Spleen (tissue), 13 donors: ENCODE measurements at regions of chr1 and their contacts with region 1.

Region 1: DNA sequence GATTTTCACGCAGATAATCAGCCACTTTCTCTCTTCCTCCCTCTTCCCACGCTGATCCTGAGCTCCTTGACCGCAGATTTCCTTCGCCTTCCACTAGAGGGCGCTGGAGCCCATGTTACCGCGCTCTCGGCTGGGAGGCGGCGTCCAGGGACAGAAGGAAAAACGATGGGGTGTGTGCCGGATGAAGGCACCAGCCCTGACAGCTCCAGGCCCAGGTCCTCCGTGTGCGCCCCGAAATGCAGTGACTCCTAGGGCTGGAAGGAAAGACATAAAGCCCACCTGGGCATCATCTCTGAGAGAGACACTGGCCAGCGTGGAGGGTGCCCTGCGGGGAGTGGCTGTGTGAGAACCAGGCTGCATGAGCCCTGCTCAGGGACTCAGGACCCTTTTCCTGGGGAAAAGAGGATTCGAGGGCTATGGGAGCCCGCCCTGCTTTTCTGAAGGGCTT is 44.9 kb upstream of the CYP2J2 start:
- DNase-seq: peak; percentile 83
- H3K4me3 ChIP-seq: peak overlapping the region in 1 of 8 donors; percentile 32
- H3K27ac ChIP-seq: no peak overlapping the region
- H3K4me1 ChIP-seq: peaks cover 4 to 11% (median 7%) of the 10 kb centered on the region in 6 donors
- H3K27me3 ChIP-seq: peaks cover 0 to 32% (median under 1%) of the 10 kb centered on the region in 7 donors
- CTCF ChIP-seq: peak; percentile 37 to 88 (median 76)
- POLR2A ChIP-seq: no peak

Region 2: DNA sequence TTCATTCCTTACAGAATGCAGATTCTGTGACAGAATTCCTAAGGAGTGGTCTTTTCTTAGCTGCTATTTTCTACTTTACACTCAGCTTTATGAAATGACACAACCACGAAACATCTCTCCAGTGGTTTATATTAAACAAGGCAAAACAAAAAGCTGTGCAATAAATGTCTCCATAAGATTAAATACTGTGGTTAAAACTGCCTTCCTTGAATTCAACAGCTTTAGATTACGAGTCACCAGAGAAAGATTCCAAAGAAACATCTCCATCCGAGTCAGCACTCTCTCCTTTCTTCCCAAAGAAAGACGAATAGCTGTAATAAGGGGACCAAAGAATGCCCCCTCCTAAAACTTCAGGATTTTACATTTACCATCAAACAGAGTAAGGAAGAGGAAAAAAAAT is 106.7 kb after region 1 on chr1:
- intact Hi-C with region 1: no loop called
- DNase-seq: no peak
- H3K4me3 ChIP-seq: no peak overlapping the region
- H3K27ac ChIP-seq: no peak overlapping the region
- H3K4me1 ChIP-seq: no peaks in the 10 kb centered on the region
- H3K27me3 ChIP-seq: peaks cover 0 to 36% (median 15%) of the 10 kb centered on the region in 7 donors
- CTCF ChIP-seq: no peak
- POLR2A ChIP-seq: no peak

Region 3: GRCh38 chr1:61453111-61453961 is 1481.8 kb after region 1 on chr1:
- intact Hi-C with region 1: loop called (anchors 5 kb)
- DNase-seq: peak; percentile 85
- H3K4me3 ChIP-seq: no peak overlapping the region
- H3K27ac ChIP-seq: peak overlapping the region in 5 of 8 donors; percentile 31 to 61 (median 39)
- H3K4me1 ChIP-seq: peaks cover 6 to 51% (median 23%) of the 10 kb centered on the region in 6 donors
- H3K27me3 ChIP-seq: no peaks in the 10 kb centered on the region
- CTCF ChIP-seq: peak; percentile 29 to 84 (median 71)
- POLR2A ChIP-seq: no peak

Region 4: GRCh38 chr1:61851849-61852669 is 1880.6 kb after region 1 on chr1:
- intact Hi-C with region 1: loop called (anchors 5 kb)
- DNase-seq: no peak
- H3K4me3 ChIP-seq: no peak overlapping the region
- H3K27ac ChIP-seq: no peak overlapping the region
- H3K4me1 ChIP-seq: no peaks in the 10 kb centered on the region
- H3K27me3 ChIP-seq: no peaks in the 10 kb centered on the region
- CTCF ChIP-seq: peak in 9 of 11 experiments; percentile 20 to 78 (median 64)
- POLR2A ChIP-seq: no peak